ENCODE measurements at regions of chr1 and their contacts with region 1.

Region 1: GRCh38 chr1:200971955-200972711 is 51.4 kb downstream of the KIF21B start:
- DNase-seq: peak; percentile 49 to 78 (median 62)
- ATAC-seq: peak in 3 of 4 donors; percentile 27 to 35 (median 33)
- H3K4me3 ChIP-seq: peak overlapping the region in 3 of 12 donors; percentile 7 to 19 (median 17)
- H3K27ac ChIP-seq: no peak overlapping the region
- H3K4me1 ChIP-seq: peaks cover 0 to 11% (median 4%) of the 10 kb centered on the region in 12 donors
- H3K27me3 ChIP-seq: no peaks in the 10 kb centered on the region
- CTCF ChIP-seq: peak; percentile 85 to 99 (median 96)
- POLR2A ChIP-seq: no peak

Region 2: DNA sequence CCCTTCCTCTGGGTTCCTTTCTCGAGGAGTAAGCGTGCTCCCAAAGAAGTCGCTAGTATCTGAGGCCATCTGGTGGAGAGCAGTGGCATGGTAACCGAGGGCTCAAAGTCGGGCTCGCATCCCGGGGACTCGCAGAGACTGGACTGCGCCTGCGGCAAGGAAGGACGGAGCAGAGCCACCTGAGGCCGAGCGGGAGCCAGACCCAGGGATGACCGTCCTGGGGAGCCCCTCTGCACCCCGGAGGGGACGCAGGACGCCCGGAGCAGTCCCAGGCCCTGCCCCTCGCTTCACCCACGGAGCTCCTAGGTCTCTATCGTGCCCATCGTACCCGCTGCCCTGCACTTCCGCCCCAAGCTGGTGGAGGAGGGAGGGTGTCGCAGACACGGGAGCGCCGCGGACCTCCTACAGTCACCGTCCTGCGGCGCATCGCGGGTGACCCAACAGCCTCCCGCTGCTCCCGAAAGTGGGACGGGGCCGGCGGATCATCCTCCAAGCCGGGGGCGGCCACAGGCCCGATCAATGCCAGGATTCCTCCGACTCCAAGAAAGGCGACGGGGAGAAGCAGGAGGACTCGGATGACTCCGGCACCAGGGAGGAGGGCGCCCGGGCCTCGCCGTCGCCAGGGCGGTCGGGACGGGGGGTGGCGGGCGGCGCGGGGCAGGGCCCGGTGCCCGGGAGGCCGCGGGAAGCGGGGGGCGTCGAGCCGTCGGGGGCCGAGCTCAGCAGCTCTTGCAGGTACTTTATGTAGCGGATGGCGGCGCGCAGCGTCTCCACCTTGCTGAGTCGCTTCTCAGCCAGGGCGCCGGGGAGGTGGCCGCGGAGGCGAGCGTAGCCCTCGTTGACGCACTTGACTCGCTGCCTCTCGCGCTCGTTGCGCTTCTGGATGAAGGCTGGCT is 142.4 kb after region 1 on chr1:
- intact Hi-C with region 1: loop called (anchors 1 to 5 kb)
- DNase-seq: peak; percentile 78 to 88 (median 87)
- ATAC-seq: peak; percentile 79 to 98 (median 94)
- H3K4me3 ChIP-seq: peak overlapping the region; percentile 3 to 66 (median 52)
- H3K27ac ChIP-seq: no peak overlapping the region
- H3K4me1 ChIP-seq: peaks cover 0 to 15% (median 5%) of the 10 kb centered on the region in 12 donors
- H3K27me3 ChIP-seq: peaks cover 0 to 43% (median 14%) of the 10 kb centered on the region in 9 donors
- CTCF ChIP-seq: peak; percentile 60 to 90 (median 76)
- POLR2A ChIP-seq: no peak

Region 3: DNA sequence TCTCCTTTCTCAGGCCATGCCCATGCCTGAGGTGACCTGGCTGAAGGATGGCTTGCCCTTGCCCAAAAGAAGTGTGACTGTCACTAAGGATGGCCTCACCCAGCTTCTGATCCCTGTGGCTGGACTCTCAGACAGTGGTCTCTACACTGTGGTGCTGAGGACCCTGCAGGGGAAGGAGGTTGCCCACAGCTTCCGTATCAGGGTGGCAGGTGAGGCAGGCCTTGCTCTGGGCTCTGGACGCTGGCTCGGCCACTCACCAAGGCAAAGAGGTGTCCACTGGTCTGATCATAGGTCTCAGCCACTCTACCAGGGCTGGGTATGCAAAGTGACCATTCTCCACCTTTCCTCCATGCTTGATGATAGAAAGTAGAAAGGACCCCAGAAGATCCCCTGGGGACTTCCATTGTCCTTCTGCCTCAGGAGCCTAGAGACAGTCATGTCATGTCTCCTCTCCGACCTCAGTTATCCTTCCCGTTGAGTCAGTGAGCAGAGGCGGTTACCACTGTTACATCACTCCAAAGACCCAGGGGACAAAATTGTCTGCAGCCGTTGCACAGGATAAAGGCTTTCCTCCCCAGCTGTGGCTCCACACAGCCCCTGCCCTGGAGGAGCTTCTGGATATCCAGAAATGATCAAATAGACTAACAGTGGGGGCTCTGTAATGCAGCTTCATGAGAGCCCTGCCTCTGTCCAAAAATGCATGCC is 252.7 kb after region 1 on chr1:
- intact Hi-C with region 1: loop called in 4 of 10 experiments (anchors 5 to 10 kb)
- DNase-seq: no peak
- ATAC-seq: no peak
- H3K4me3 ChIP-seq: no peak overlapping the region
- H3K27ac ChIP-seq: no peak overlapping the region
- H3K4me1 ChIP-seq: no peaks in the 10 kb centered on the region
- H3K27me3 ChIP-seq: no peaks in the 10 kb centered on the region
- CTCF ChIP-seq: no peak
- POLR2A ChIP-seq: no peak

Region 4: GRCh38 chr1:201229771-201230635 is 257.9 kb after region 1 on chr1:
- intact Hi-C with region 1: loop called in 1 of 10 experiments (anchors 10 kb)
- DNase-seq: peak in 1 of 5 donors; percentile 2
- ATAC-seq: no peak
- H3K4me3 ChIP-seq: no peak overlapping the region
- H3K27ac ChIP-seq: no peak overlapping the region
- H3K4me1 ChIP-seq: no peaks in the 10 kb centered on the region
- H3K27me3 ChIP-seq: no peaks in the 10 kb centered on the region
- CTCF ChIP-seq: no peak
- POLR2A ChIP-seq: no peak